Heart left ventricle (tissue), 16 donors: ENCODE measurements at regions of chr11 and their contacts with region 1.

Region 1: GRCh38 chr11:90766121-90766520 is 543.3 kb upstream of the CHORDC1 start:
- DNase-seq: no peak
- ATAC-seq: no peak
- H3K4me3 ChIP-seq: no peak overlapping the region
- H3K27ac ChIP-seq: no peak overlapping the region
- H3K4me1 ChIP-seq: no peaks in the 10 kb centered on the region
- H3K27me3 ChIP-seq: no peaks in the 10 kb centered on the region
- CTCF ChIP-seq: no peak
- POLR2A ChIP-seq: no peak

Region 2: DNA sequence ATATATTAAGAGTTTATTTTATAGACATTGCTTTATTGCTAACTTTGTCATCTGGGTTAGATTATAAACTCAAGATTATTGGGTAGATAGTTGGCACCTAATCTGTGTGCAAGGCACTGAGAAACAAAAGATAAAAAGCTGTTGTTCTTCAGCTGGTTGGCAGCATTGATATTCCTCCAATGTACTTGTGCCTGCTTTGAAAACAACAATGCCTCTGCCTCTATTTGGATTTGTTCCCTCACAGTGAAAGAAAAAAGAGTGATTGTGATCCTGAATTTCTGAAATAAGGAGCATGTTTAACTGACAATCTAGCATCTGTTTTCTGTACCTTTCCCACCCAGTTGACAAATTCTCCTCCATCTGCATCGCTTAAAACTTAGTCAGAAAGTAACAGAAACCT is 1490.2 kb before region 1 on chr11:
- intact Hi-C with region 1: no loop called
- DNase-seq: no peak
- ATAC-seq: no peak
- H3K4me3 ChIP-seq: no peak overlapping the region
- H3K27ac ChIP-seq: no peak overlapping the region
- H3K4me1 ChIP-seq: no peaks in the 10 kb centered on the region
- H3K27me3 ChIP-seq: no peaks in the 10 kb centered on the region
- CTCF ChIP-seq: no peak
- POLR2A ChIP-seq: no peak

Region 3: GRCh38 chr11:90700789-90701439 is 65.2 kb before region 1 on chr11:
- intact Hi-C with region 1: loop called in 1 of 10 experiments (anchors 10 kb)
- DNase-seq: no peak
- ATAC-seq: no peak
- H3K4me3 ChIP-seq: no peak overlapping the region
- H3K27ac ChIP-seq: no peak overlapping the region
- H3K4me1 ChIP-seq: no peaks in the 10 kb centered on the region
- H3K27me3 ChIP-seq: no peaks in the 10 kb centered on the region
- CTCF ChIP-seq: no peak
- POLR2A ChIP-seq: no peak

Region 4: GRCh38 chr11:90753546-90753945 is 12.6 kb before region 1 on chr11:
- intact Hi-C with region 1: loop called in 1 of 10 experiments (anchors 2 kb)
- DNase-seq: no peak
- ATAC-seq: no peak
- H3K4me3 ChIP-seq: no peak overlapping the region
- H3K27ac ChIP-seq: no peak overlapping the region
- H3K4me1 ChIP-seq: no peaks in the 10 kb centered on the region
- H3K27me3 ChIP-seq: no peaks in the 10 kb centered on the region
- CTCF ChIP-seq: no peak
- POLR2A ChIP-seq: no peak